Cardiac septum (tissue), 1 donor: ENCODE measurements at regions of chr3 and their contacts with region 1.

Region 1: GRCh38 chr3:45055411-45056143 is 29.5 kb downstream of the CLEC3B start:
- DNase-seq: no peak

Region 2: DNA sequence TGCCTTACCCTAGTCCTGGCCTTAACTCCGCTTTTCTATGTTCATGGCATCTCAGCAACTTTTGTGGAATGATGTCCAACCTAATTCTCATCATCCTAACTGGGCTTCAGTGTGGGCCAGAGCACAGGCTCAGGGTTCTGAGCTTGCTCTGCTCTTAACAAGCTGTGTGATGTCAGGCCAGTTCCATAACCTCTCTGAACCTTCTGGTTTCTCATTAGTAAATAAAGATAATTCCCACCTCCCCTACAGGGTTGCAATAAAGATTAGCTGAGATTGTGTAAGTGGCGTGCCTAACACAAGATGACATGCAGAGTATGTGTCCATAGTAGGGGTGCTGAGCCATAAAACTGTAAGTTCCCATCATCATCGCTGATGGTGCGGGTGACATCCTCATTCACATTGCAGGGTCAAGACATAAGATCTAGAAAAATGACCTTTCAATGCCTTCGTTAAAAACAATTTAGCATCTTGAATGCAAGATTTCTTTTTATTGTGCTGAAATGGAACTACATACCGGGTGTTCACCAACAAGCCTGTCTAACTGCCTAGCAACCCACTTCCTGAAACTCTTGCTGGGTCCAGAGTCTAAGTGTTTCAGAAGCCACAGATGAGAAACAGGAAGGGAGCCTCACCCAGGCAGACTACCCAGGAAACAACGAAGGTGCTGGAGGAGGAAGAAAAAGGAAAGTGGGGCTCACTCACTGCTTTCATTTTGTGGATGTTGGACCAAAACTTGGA is 54.4 kb after region 1 on chr3:
- intact Hi-C with region 1: loop called (anchors 5 kb)
- DNase-seq: no peak

Region 3: GRCh38 chr3:45210308-45211041 is 154.9 kb after region 1 on chr3:
- intact Hi-C with region 1: loop called (anchors 5 kb)
- DNase-seq: peak; percentile 90